ENCODE measurements at regions of chr15 and their contacts with region 1.

Region 1: GRCh38 chr15:28123408-28124023 is 24.4 kb upstream of the OCA2 start:
- DNase-seq: peak; percentile 83

Region 2: DNA sequence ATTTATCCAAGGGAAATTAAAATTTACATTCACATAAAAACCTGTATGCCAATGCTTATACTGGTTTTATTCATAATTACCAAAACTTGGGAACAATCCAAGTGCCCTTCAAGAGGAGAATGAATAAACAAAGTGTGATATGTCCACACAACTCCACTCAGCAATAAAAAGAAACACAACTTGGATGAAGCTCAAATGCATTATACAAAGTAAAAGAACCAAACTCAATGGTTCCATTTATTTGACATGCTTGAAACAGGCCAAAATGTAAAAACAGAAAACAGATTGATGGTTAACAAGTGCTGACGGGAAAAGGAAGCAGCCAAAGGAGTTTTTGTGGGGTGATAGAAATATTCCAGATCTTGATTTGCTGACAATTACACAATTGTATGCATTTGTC is 47.9 kb before region 1 on chr15:
- intact Hi-C with region 1: loop called in 1 of 2 experiments (anchors 10 kb)
- DNase-seq: no peak

Region 3: GRCh38 chr15:28169366-28169765 is 45.9 kb after region 1 on chr15:
- intact Hi-C with region 1: no loop called
- DNase-seq: no peak

Region 4: DNA sequence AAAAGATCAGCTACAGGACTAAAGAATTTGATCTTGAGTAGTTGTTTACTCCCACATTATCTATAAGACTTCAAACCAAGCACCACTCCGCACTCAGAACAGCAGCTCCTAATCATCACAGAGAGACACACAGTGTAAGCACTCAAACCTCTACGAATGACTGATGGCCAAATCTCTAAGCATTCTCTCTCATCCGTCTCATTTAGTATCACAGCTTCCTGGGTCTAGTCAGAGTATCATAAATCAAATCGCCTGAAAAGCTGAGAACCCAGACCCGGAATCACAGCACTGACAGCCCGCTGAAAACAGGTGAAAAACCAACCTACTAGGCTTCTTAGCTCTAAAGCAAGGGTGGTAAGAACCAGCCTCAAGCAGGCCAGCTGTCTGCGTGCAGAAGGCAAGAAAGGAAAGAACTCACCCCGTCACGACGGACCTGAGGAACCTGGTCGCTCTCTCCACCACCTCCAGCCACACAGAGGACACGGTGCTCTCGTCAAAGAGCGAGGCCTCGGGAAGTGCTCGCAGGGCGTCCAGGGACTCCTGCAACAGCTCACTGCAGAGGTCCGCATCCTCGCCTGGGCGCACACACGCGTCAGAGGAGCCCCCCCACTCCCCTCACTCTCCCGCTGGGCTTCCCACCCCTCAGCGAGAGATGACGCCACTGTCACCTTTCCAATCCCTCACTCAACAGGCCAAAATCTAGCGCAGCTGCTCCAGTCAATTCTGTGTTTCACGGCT is 150.5 kb after region 1 on chr15:
- intact Hi-C with region 1: no loop called
- DNase-seq: no peak

Region 5: GRCh38 chr15:29376590-29376989 is 1253.1 kb after region 1 on chr15:
- intact Hi-C with region 1: no loop called
- DNase-seq: no peak